Natural killer cell (primary cell): ENCODE measurements at regions of chr5 and their contacts with region 1.

Region 1: DNA sequence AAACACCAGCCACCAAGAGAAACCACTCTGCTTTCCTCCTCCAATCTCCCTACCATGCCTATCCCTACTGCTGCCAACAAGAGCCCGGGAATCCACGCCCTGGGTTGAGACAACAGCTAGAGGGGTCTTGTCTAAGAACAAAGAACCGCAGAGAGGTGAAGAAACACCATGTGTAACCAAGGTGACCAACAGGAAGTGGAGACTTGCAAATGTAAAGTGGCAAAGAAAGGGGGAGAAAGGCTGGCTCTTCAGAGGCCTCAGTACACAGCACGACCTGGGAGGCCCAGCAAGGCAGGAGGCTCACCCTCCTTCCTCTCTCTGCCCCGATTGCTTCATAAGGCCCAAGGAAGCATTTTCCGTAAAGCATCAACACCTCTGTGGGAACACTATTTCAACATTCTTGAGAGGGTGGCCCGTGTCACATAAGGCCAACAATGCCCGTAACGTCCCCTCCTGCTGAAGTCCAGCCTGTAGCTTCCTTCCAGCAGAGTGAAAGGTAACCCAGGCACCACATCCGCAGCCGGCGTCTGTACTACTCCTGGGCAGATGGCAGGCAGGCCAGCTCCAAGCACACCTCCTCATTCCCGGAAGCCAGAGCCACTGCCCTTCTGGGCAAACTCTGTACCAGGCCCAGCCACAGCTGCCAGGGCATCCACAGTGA is 18.3 kb downstream of the CCNJL start:
- DNase-seq: peak; percentile 32 to 54
- ATAC-seq: peak; percentile 52 to 74 (median 67)
- H3K4me3 ChIP-seq: no peak overlapping the region
- H3K4me3 Mint-ChIP-seq: peak overlapping the region; percentile 88
- H3K27ac ChIP-seq: peak overlapping the region; percentile 91
- H3K27ac Mint-ChIP-seq: peak overlapping the region; percentile 89 to 98
- H3K4me1 ChIP-seq: peaks cover 94% of the 10 kb centered on the region
- H3K4me1 Mint-ChIP-seq: peaks cover 85 to 91% of the 10 kb centered on the region in 2 donors
- H3K27me3 ChIP-seq: no peaks in the 10 kb centered on the region
- H3K27me3 Mint-ChIP-seq: no peaks in the 10 kb centered on the region
- CTCF ChIP-seq: no peak

Region 2: GRCh38 chr5:160312134-160312959 is 18.3 kb after region 1 on chr5 and contains the start of gene CCNJL:
- intact Hi-C with region 1: loop called (anchors 1 kb)
- DNase-seq: peak; percentile 9 to 47
- ATAC-seq: peak; percentile 61 to 72 (median 66)
- H3K4me3 ChIP-seq: peak within 1 kb of the TSS; percentile 70
- H3K4me3 Mint-ChIP-seq: peak within 1 kb of the TSS; percentile 100
- H3K27ac ChIP-seq: no peak within 1 kb of the TSS
- H3K27ac Mint-ChIP-seq: peak within 1 kb of the TSS; percentile 87 to 89
- H3K4me1 ChIP-seq: peaks cover 24% of the 10 kb centered on the region
- H3K4me1 Mint-ChIP-seq: peaks cover 45% of the 10 kb centered on the region in 2 donors
- H3K27me3 ChIP-seq: no peaks in the 10 kb centered on the region
- H3K27me3 Mint-ChIP-seq: peaks cover 0 to 2% of the 10 kb centered on the region in 2 donors
- CTCF ChIP-seq: no peak
- total RNA-seq, gene CCNJL: 19.9 to 32.1 (median 20.7) TPM

Region 3: DNA sequence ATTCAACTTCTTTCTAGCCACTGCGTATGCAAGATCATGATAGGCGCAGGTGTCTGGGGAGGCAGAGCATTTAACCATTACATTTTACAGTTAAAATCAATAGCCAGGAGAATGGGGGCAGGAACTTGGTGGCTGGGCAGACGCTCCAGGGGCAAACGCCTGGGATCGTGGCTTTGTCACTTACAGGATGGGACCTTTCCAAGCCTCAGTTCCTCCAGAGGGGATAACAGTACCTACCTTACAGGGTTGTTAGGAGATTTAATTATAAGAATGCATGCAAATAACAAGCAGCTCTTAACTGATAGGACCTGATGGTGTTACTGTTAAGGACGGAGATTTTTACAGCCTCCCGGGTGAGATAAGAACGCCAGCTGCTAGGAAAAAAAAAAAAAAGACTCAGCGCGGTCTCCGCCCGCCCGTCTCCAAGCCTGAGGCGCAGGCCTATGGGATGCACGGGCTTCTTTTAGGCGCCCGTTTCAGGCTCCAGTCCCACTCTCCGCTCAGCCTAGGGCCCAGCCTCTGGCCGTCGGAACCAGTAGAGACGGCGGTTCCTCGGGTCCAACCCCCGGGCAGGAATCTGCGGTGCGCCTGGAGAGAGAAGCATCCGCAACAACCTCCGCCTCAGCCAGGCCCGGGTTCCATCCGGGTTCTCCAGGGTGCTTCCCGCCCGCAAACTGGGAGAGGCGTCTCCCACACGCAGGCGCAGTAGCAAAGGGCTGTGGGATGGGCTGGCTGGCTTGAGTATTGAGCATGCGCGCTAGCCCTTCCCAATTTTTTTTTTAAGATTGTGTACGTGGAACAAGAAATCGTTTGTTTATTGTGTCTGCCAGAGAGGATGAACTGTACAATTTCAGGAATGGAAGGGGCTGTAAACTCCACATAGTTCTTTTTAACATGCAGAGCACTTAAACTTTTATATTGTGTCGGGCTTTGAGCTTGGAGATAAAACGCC is 105.6 kb after region 1 on chr5 and contains the start of gene FAM200C:
- intact Hi-C with region 1: no loop called
- DNase-seq: peak; percentile 54 to 81
- ATAC-seq: peak; percentile 64 to 83 (median 77)
- H3K4me3 ChIP-seq: peak within 1 kb of the TSS; percentile 76
- H3K4me3 Mint-ChIP-seq: peak within 1 kb of the TSS; percentile 94
- H3K27ac ChIP-seq: peak within 1 kb of the TSS; percentile 7
- H3K27ac Mint-ChIP-seq: peak within 1 kb of the TSS; percentile 85 to 88
- H3K4me1 ChIP-seq: peaks cover 12% of the 10 kb centered on the region
- H3K4me1 Mint-ChIP-seq: peaks cover 19 to 20% of the 10 kb centered on the region in 2 donors
- H3K27me3 ChIP-seq: no peaks in the 10 kb centered on the region
- H3K27me3 Mint-ChIP-seq: no peaks in the 10 kb centered on the region
- CTCF ChIP-seq: no peak
- total RNA-seq, gene FAM200C: 0.28 to 0.57 (median 0.33) TPM